ENCODE measurements at regions of chr18 and their contacts with region 1.

Region 1: GRCh38 chr18:30415903-30416302 is 626.6 kb downstream of the DSC3 start:
- DNase-seq: no peak
- H3K4me3 Mint-ChIP-seq: no peak overlapping the region
- H3K27ac Mint-ChIP-seq: no peak overlapping the region
- H3K4me1 Mint-ChIP-seq: no peaks in the 10 kb centered on the region
- H3K27me3 Mint-ChIP-seq: no peaks in the 10 kb centered on the region
- CTCF ChIP-seq: no peak

Region 2: DNA sequence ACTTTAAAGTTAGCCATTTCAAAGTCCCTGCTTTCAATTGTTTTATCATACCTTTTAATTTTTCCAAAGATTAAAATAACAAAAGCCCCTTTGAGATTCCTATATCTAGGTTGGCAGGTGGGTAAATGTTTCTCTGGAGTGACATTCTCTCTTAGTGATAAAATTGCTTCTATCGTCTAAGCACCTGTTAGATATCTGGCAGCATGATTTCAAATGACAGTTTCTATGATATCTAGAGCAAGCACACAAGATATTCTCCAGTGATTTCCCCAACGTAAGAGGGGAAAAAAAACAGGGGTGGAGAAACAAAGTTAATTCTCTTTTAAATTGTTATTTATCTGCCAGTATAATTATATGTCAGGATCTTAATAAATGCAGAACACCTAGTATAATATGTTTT is 16.4 kb after region 1 on chr18:
- CTCF ChIA-PET with region 1: no interaction called
- intact Hi-C with region 1: loop called (anchors 1 kb)
- DNase-seq: no peak
- H3K4me3 Mint-ChIP-seq: no peak overlapping the region
- H3K27ac Mint-ChIP-seq: no peak overlapping the region
- H3K4me1 Mint-ChIP-seq: no peaks in the 10 kb centered on the region
- H3K27me3 Mint-ChIP-seq: no peaks in the 10 kb centered on the region
- CTCF ChIP-seq: no peak